ENCODE measurements at regions of chr6 and their contacts with region 1.

Region 1: DNA sequence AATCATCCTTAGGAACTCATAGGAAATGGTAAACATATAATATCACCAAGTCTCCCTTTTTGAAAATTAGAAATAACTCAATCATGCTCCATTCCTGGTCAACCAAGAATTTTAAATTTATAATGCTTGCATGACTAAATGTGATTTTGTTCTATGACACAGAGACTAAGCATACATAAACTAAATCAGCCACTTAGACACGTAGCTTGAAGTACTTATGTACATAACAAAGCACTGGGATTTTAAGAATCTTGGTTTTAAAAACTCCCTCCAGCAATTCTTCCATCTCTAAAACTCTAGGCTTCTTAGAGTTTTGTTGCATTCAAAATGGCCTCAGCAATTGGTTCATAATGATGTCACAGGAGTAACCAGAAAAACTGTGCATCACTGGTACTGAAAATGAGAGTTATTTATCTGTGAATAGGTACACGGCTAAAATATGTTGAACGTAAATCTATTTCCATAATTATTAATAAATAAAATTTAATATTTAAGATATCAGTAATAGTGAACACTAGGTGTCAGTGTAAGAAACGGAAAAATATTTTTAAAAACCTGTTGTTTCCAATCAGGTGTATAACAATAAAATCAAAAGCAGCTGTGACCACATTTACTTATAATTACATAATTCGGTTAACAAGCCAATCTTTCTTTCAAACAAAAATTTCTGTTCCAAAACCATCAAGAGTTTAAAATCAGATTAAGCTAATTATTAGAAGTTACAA is 241.6 kb upstream of the RUNX2 start:
- DNase-seq: no peak
- H3K4me3 ChIP-seq: no peak overlapping the region
- H3K27ac ChIP-seq: no peak overlapping the region
- H3K4me1 ChIP-seq: no peaks in the 10 kb centered on the region
- H3K27me3 ChIP-seq: no peaks in the 10 kb centered on the region
- CTCF ChIP-seq: peak in 1 of 2 donors; percentile 6

Region 2: DNA sequence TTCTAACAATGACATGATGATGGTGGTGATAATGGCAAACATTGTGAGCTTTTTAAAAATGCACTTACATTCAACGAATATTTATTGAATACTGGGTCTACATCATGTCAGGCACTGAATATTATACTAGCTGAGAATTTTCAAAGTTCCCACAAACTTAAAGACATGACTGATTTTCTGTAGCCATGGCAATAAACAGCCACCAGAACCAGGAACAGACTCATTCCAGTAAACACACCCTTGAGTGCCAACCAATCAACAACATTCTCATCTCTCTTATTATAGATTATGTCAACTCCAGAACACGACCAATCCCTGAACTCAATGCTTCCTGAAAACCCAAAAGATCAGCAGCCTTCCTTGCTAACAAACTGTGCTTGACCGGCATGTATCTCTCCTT is 29.2 kb after region 1 on chr6:
- CTCF ChIA-PET with region 1: interaction called, 15 read pairs
- dilution Hi-C with region 1: no loop called
- in situ Hi-C with region 1: no loop called
- intact Hi-C with region 1: no loop called
- DNase-seq: peak; percentile 22
- H3K4me3 ChIP-seq: no peak overlapping the region
- H3K27ac ChIP-seq: no peak overlapping the region
- H3K4me1 ChIP-seq: peaks cover 4% of the 10 kb centered on the region
- H3K27me3 ChIP-seq: no peaks in the 10 kb centered on the region
- CTCF ChIP-seq: no peak

Region 3: DNA sequence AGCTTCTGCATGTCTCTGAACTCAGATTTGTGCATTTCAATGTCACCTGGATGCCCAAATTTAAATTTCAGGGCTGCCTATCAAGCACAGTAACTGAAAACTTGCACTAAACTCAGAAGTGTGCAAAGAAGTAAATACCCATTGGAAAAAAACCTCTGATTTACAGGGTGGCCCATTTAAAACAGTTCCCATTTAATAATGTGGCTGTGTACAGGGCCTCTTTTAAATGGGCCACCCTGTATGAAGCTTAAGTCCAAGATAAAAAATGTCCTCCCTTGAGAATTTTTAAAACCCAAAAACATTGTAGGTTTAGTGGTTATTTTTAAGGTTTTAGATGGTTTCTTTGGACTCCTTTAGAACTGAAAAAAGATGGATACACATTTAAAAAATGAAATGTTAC is 39.5 kb after region 1 on chr6:
- CTCF ChIA-PET with region 1: no interaction called
- dilution Hi-C with region 1: no loop called
- in situ Hi-C with region 1: no loop called
- intact Hi-C with region 1: no loop called
- DNase-seq: no peak
- H3K4me3 ChIP-seq: no peak overlapping the region
- H3K27ac ChIP-seq: no peak overlapping the region
- H3K4me1 ChIP-seq: no peaks in the 10 kb centered on the region
- H3K27me3 ChIP-seq: no peaks in the 10 kb centered on the region
- CTCF ChIP-seq: no peak

Region 4: DNA sequence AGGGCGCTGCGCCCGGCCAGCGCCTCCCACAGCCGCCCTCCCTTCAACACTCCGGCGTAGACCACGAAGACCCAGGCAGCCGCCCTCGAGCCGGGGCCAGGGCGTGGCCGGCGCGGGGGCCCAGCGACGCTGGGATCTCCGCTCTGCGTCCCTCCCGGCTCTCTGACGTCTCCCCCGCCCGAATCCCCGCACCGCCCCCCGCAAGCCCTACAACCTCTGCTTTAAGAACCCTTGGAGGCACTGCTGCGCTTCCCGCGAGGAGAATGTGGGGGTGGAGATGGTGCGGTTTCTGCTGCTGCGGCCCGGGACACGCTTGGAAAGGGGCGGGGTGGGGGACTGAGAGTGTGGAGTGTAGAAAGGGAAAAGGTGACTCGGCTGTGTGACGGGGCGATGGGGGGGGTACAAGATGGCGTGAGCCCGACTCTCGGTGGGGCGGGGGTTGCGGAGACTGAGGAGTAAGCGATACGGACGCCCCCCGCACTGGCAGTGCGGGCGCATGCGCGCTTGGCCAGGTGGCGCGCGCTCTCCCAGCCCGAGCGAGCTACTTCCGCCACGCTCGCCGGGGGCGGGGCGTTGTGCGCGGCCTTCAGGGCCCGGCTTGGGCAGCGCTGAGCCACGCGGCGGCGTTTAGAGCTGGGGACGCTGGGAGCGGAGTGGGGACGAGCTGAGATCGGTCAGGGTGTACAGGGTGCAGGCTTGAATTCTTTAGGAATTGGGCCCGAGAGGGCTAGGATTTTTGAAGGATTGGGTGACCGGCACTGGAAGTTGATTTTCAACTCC is 291.2 kb after region 1 on chr6 and contains the start of gene SUPT3H:
- CTCF ChIA-PET with region 1: no interaction called
- dilution Hi-C with region 1: no loop called
- in situ Hi-C with region 1: no loop called
- intact Hi-C with region 1: loop called (anchors 5 kb)
- DNase-seq: peak; percentile 90
- H3K4me3 ChIP-seq: peak within 1 kb of the TSS; percentile 72 to 83 (median 79)
- H3K27ac ChIP-seq: peak within 1 kb of the TSS; percentile 81
- H3K4me1 ChIP-seq: peaks cover 15% of the 10 kb centered on the region
- H3K27me3 ChIP-seq: no peaks in the 10 kb centered on the region
- CTCF ChIP-seq: peak in 1 of 2 donors; percentile 48
- total RNA-seq, gene SUPT3H: 7.3 to 8.3 TPM

Region 5: DNA sequence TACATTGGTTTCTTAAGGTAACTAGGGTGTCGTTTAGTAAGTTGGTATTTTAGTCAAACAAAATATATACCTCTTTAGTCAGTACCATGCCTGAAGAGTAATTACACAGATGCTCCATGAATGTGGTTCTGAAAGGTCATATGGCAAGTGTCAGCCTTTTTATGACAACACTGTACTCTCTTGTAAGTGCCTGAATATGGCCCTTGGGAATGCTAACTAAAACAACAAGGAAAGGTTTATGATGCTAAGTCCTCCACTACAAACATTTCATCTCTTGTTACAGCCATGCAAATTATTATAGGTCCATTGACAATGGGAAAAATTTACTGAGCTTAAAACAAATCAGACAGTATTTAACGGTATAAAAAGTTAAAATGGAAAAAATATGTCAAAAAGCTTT is 330.2 kb after region 1 on chr6:
- CTCF ChIA-PET with region 1: no interaction called
- dilution Hi-C with region 1: no loop called
- in situ Hi-C with region 1: no loop called
- intact Hi-C with region 1: loop called (anchors 2 kb)
- DNase-seq: no peak
- H3K4me3 ChIP-seq: no peak overlapping the region
- H3K27ac ChIP-seq: no peak overlapping the region
- H3K4me1 ChIP-seq: peaks cover 19% of the 10 kb centered on the region
- H3K27me3 ChIP-seq: peaks cover 3% of the 10 kb centered on the region
- CTCF ChIP-seq: no peak